Calu3 (cell line): ENCODE measurements at regions of chr2 and their contacts with region 1.

Region 1: GRCh38 chr2:233566141-233566960 is at the start of gene USP40:
- DNase-seq: peak; percentile 88
- H3K4me3 Mint-ChIP-seq: peak within 1 kb of the TSS; percentile 97
- H3K27ac Mint-ChIP-seq: peak within 1 kb of the TSS; percentile 89
- H3K4me1 Mint-ChIP-seq: no peaks in the 10 kb centered on the region
- H3K27me3 Mint-ChIP-seq: no peaks in the 10 kb centered on the region
- CTCF ChIP-seq: no peak
- total RNA-seq, gene USP40: 44.2 and 45.8 TPM in 2 replicates

Region 2: GRCh38 chr2:233584210-233584729 is 17.9 kb after region 1 on chr2:
- CTCF ChIA-PET with region 1: no interaction called
- intact Hi-C with region 1: no loop called
- DNase-seq: no peak
- H3K4me3 Mint-ChIP-seq: no peak overlapping the region
- H3K27ac Mint-ChIP-seq: no peak overlapping the region
- H3K4me1 Mint-ChIP-seq: no peaks in the 10 kb centered on the region
- H3K27me3 Mint-ChIP-seq: no peaks in the 10 kb centered on the region
- CTCF ChIP-seq: no peak

Region 3: GRCh38 chr2:233643128-233643527 is 76.8 kb after region 1 on chr2:
- CTCF ChIA-PET with region 1: no interaction called
- intact Hi-C with region 1: loop called (anchors 1 kb)
- DNase-seq: peak; percentile 63
- H3K4me3 Mint-ChIP-seq: no peak overlapping the region
- H3K27ac Mint-ChIP-seq: peak overlapping the region; percentile 18
- H3K4me1 Mint-ChIP-seq: peaks cover 42% of the 10 kb centered on the region
- H3K27me3 Mint-ChIP-seq: no peaks in the 10 kb centered on the region
- CTCF ChIP-seq: peak; percentile 53

Region 4: DNA sequence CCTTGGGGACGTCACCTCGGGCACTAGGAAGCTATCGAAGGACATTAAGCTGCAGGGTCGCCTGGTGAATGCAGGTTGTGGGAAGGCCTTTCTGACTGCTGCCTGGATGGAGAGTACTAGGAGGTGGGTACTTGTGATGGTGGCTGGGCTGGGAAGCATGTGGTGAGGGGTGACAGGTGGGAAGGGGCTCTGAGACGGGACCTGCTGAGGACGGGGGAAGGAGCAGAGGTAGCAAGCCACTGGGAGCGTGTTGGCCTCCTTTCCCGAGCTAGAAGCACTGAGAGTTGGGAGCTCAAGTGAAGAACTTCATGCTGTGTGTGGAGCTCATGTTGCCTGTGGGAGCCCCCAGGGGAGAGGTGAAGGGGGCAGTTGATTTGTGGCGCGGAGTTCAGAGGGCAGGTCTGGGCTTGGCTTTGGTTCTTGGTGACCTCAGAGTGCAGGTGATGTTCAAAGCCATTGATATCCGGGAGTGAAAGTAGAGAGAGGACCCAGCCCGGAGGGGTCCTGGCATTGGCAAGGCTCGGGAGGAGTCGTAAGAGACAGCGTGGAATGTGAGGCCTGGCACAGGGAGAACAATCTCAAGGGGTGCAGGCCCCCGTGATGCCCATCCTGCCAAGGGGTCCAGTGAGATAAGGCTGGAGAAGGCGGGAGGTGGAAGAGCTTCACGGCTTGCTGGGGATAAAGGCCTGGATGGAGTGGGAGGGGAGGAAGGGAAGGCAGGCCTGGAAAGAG is 225.0 kb after region 1 on chr2:
- CTCF ChIA-PET with region 1: interaction called, 18 read pairs
- intact Hi-C with region 1: no loop called
- DNase-seq: no peak
- H3K4me3 Mint-ChIP-seq: no peak overlapping the region
- H3K27ac Mint-ChIP-seq: no peak overlapping the region
- H3K4me1 Mint-ChIP-seq: no peaks in the 10 kb centered on the region
- H3K27me3 Mint-ChIP-seq: peaks cover 10% of the 10 kb centered on the region
- CTCF ChIP-seq: no peak